ENCODE measurements at regions of chr11 and their contacts with region 1.

Region 1: DNA sequence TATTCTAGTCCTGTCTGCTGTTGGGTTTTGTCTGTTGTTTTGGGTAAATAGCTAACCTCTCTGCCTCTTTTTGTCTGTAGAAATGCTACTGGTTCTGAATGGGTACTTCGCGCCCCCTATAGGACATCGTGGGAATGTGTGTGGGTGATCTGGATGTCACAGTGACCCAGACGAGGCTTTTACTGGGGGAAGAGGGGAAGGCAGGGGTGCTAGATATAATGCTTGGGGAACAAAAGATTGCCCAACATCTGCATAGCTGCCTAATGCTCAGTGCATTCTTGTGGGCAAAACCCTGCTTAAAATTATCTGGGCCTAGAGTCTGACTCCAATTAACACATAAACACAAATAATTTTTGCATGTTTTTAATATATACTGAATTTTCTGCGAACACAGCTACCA is 57.7 kb downstream of the BMAL1 start:
- DNase-seq: peak; percentile 62
- H3K4me3 ChIP-seq: no peak overlapping the region
- H3K27ac ChIP-seq: peak overlapping the region; percentile 83
- H3K4me1 ChIP-seq: peaks cover 76% of the 10 kb centered on the region
- H3K27me3 ChIP-seq: no peaks in the 10 kb centered on the region
- CTCF ChIP-seq: peak; percentile 84 to 86

Region 2: GRCh38 chr11:13216019-13216710 is 119.2 kb before region 1 on chr11:
- CTCF ChIA-PET with region 1: interaction called, 6 read pairs
- dilution Hi-C with region 1: no loop called
- in situ Hi-C with region 1: loop called (anchors 5 kb)
- intact Hi-C with region 1: no loop called
- DNase-seq: peak; percentile 96
- H3K4me3 ChIP-seq: peak overlapping the region in 1 of 3 experiments; percentile 25
- H3K27ac ChIP-seq: peak overlapping the region; percentile 95
- H3K4me1 ChIP-seq: peaks cover 34% of the 10 kb centered on the region
- H3K27me3 ChIP-seq: no peaks in the 10 kb centered on the region
- CTCF ChIP-seq: no peak

Region 3: DNA sequence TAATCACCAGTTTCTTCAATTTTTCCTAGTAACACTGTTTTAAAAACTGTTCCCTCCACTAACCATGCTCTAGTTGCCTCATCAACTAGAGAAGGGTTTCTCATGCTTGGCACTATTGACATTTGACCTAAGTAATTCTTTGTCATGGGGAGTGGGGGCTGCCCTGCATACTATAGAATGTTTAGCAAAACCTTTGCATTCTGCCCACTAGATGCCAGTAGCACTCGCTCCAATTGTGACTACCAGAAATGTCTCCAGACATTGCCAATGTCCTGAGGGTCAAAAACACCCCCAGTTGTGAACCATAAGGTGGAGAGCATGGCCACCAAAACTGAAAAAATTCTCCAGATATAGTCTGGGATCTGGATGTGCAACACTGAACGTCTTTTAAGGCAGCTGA is 85.3 kb before region 1 on chr11:
- CTCF ChIA-PET with region 1: interaction called, 3 read pairs
- dilution Hi-C with region 1: no loop called
- in situ Hi-C with region 1: loop called in 1 of 2 experiments (anchors 10 kb)
- intact Hi-C with region 1: loop called (anchors 1 kb)
- DNase-seq: peak; percentile 20
- H3K4me3 ChIP-seq: no peak overlapping the region
- H3K27ac ChIP-seq: no peak overlapping the region
- H3K4me1 ChIP-seq: no peaks in the 10 kb centered on the region
- H3K27me3 ChIP-seq: no peaks in the 10 kb centered on the region
- CTCF ChIP-seq: peak; percentile 35 to 69

Region 4: GRCh38 chr11:13276832-13277767 is 58.2 kb before region 1 on chr11:
- CTCF ChIA-PET with region 1: interaction called, 5 read pairs
- dilution Hi-C with region 1: no loop called
- in situ Hi-C with region 1: no loop called
- intact Hi-C with region 1: loop called (anchors 1 kb)
- DNase-seq: peak; percentile 99
- H3K4me3 ChIP-seq: peak overlapping the region; percentile 83 to 96 (median 83)
- H3K27ac ChIP-seq: peak overlapping the region; percentile 75
- H3K4me1 ChIP-seq: peaks cover 17% of the 10 kb centered on the region
- H3K27me3 ChIP-seq: no peaks in the 10 kb centered on the region
- CTCF ChIP-seq: no peak